H1 (cell line): ENCODE measurements at regions of chr7 and their contacts with region 1.

Region 1: GRCh38 chr7:43942997-43943704 is 16.9 kb downstream of the UBE2D4 start:
- DNase-seq: no peak
- H3K4me3 ChIP-seq: no peak overlapping the region
- H3K27ac ChIP-seq: no peak overlapping the region
- H3K4me1 ChIP-seq: peaks cover 0 to 2% (median 0%) of the 10 kb centered on the region in 4 experiments; a peak in 1 of 7 replicates
- H3K27me3 ChIP-seq: no peaks in the 10 kb centered on the region; a peak in 1 of 7 replicates
- CTCF ChIP-seq: peak; percentile 11 to 41 (median 40)
- EP300 ChIP-seq: no peak
- POLR2A ChIP-seq: no peak
- RAD21 ChIP-seq: peak; percentile 59 to 69

Region 2: DNA sequence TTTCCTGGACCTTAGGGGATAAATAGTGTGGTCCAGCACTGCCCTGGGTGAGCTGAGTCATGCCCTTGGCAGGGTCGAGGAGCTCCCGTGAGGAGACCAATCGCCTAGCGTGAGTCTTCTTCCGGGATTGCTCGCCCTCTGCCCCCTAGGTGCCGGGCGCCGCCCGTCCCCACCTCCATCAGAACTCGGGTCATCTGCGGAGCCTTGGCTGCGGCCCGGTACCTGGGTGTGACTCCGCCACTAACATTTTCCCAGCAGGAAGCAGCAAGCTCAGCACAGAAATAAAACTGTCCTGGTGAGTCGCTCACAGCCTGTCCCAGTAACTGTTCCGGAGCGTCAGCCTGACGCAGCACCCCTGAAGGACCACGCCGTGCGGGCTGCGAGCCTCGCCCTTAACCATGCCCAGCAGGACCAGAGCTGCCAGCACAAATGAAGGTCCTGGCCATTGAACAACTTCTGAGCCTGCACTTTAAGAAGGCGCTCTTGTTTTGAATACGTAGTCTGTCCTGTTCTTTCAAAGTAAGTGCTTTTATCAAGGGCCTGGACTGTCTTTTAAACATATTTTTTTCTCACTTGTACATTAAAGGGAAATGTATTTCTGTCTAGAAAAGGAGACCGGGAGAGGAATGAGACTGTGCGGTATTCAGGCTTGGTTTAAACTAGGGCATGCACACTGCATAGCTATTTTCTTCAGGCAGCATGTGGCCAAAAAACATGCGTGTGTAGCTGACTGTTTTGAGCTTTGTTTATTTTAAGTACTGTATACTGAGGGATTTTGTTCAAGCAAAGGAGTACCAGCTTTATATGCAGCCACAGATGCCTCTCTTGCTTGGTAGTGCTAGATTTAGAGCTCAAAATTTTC is 694.0 kb before region 1 on chr7:
- CTCF ChIA-PET with region 1: no interaction called
- POLR2A ChIA-PET with region 1: no interaction called
- DNase-seq: no peak
- H3K4me3 ChIP-seq: no peak overlapping the region
- H3K27ac ChIP-seq: peak overlapping the region; percentile 40; the same call in 1 of the 2 replicates
- H3K4me1 ChIP-seq: peaks cover 0 to 6% (median 2%) of the 10 kb centered on the region in 4 experiments; a peak in 3 of 7 replicates
- H3K27me3 ChIP-seq: no peaks in the 10 kb centered on the region
- CTCF ChIP-seq: no peak
- EP300 ChIP-seq: no peak
- POLR2A ChIP-seq: no peak
- RAD21 ChIP-seq: no peak

Region 3: GRCh38 chr7:43791665-43792064 is 151.5 kb before region 1 on chr7:
- CTCF ChIA-PET with region 1: no interaction called
- POLR2A ChIA-PET with region 1: no interaction called
- DNase-seq: no peak
- H3K4me3 ChIP-seq: no peak overlapping the region
- H3K27ac ChIP-seq: no peak overlapping the region
- H3K4me1 ChIP-seq: no peaks in the 10 kb centered on the region
- H3K27me3 ChIP-seq: no peaks in the 10 kb centered on the region
- CTCF ChIP-seq: no peak
- EP300 ChIP-seq: no peak
- POLR2A ChIP-seq: no peak
- RAD21 ChIP-seq: no peak

Region 4: DNA sequence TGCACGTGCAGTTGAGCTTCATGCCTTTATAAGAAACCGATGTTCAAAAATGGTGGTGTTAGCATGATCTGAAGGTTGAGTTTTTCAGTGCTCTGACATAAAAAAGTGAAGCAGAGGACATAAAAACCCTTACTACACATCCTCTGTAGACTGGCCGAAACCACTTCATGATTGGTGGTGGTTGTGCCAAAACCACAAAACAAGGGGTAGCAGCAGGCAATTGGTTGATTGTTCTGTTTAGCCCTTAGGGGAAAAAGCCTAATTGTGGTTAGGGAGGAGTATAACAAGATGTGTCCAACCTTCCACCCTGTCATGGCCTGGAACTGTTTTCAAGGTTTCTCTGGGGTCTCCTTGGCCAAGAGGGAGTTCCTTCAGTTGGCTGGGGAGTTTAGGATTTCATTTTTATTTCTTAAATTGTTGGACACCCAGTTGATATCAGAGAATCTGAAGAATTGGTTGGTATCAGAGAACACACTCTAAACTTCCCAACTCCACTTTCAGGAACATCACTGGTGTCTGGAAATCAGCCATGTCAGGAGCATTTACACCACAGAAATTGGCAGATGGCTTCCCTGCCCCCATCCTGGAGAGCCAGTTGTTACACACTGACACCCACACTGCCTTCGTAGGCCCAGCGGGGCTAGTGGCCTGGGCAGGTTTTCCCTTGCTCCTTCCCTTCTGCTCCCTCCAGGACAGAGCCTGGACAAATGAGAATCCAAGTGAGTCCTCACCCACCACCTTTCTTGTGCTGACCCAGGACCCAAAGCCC is 92.6 kb before region 1 on chr7:
- CTCF ChIA-PET with region 1: interaction called, 13 read pairs
- POLR2A ChIA-PET with region 1: no interaction called
- DNase-seq: no peak
- H3K4me3 ChIP-seq: no peak overlapping the region
- H3K27ac ChIP-seq: no peak overlapping the region
- H3K4me1 ChIP-seq: no peaks in the 10 kb centered on the region
- H3K27me3 ChIP-seq: no peaks in the 10 kb centered on the region
- CTCF ChIP-seq: no peak
- EP300 ChIP-seq: no peak
- POLR2A ChIP-seq: no peak
- RAD21 ChIP-seq: no peak

Region 5: GRCh38 chr7:43954524-43955228 is 11.5 kb after region 1 on chr7:
- CTCF ChIA-PET with region 1: interaction called, 28 read pairs
- POLR2A ChIA-PET with region 1: no interaction called
- DNase-seq: peak; percentile 25 to 50
- H3K4me3 ChIP-seq: no peak overlapping the region
- H3K27ac ChIP-seq: no peak overlapping the region
- H3K4me1 ChIP-seq: no peaks in the 10 kb centered on the region
- H3K27me3 ChIP-seq: no peaks in the 10 kb centered on the region
- CTCF ChIP-seq: peak; percentile 72 to 91 (median 76)
- EP300 ChIP-seq: no peak
- POLR2A ChIP-seq: no peak
- RAD21 ChIP-seq: peak; percentile 83 to 88

Region 6: GRCh38 chr7:44847508-44847920 is 904.4 kb after region 1 on chr7:
- CTCF ChIA-PET with region 1: no interaction called
- POLR2A ChIA-PET with region 1: no interaction called
- DNase-seq: peak in 1 of 2 experiments; percentile 33
- H3K4me3 ChIP-seq: peak overlapping the region; percentile 64 to 93 (median 85)
- H3K27ac ChIP-seq: peak overlapping the region; percentile 86
- H3K4me1 ChIP-seq: peaks cover 0 to 3% (median 0%) of the 10 kb centered on the region in 4 experiments; a peak in 2 of 7 replicates
- H3K27me3 ChIP-seq: no peaks in the 10 kb centered on the region
- CTCF ChIP-seq: peak; percentile 68 to 75 (median 70)
- EP300 ChIP-seq: no peak
- POLR2A ChIP-seq: no peak
- RAD21 ChIP-seq: peak; percentile 64 to 69